ENCODE measurements at regions of chr9 and their contacts with region 1.

Region 1: DNA sequence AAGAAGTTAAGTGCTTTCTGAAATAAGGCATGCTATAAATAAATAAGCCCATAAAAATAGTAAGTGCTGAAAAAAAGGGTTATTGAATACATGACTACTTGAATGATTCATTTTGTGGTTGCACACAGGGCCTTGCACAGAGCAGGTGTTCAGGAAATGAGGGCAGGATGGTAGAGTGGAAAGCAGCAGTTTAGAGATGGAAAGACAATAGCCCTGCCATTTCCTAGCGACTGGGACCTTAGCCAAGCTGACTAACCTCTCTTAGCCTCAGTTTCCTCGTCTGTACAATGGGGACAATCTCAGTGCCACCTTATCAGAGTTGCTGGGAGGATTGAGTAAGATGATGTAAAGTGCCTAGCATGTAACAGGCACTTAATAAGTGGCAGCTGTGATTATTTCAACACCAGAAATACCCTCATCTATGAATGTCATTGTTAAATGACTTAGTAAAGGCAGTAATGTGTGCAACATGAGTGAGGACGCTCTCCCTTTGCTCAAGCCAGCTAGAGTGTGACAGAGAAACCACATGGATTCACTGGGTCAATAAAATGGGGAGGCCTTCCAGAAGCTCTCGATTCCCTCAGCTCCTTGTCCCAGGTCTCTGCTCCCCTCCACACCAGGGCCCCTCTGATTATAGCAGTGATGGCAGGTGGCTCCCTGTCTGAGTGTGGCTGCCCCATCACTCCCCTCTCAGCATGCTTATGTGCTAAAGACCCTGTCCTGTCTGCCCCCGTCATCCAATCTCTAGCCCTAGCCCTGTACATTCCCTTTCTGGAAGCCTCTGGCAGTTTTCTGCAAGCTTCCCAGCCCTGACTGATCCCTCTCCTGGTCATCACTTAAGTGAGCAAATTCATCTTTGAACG is 16.0 kb upstream of the PHF19 start:
- DNase-seq: no peak
- ATAC-seq: peak; percentile 82
- H3K4me3 Mint-ChIP-seq: peak overlapping the region; percentile 61
- H3K27ac Mint-ChIP-seq: peak overlapping the region; percentile 90
- H3K4me1 Mint-ChIP-seq: peaks cover 60% of the 10 kb centered on the region
- H3K27me3 Mint-ChIP-seq: no peaks in the 10 kb centered on the region
- CTCF ChIP-seq: no peak

Region 2: DNA sequence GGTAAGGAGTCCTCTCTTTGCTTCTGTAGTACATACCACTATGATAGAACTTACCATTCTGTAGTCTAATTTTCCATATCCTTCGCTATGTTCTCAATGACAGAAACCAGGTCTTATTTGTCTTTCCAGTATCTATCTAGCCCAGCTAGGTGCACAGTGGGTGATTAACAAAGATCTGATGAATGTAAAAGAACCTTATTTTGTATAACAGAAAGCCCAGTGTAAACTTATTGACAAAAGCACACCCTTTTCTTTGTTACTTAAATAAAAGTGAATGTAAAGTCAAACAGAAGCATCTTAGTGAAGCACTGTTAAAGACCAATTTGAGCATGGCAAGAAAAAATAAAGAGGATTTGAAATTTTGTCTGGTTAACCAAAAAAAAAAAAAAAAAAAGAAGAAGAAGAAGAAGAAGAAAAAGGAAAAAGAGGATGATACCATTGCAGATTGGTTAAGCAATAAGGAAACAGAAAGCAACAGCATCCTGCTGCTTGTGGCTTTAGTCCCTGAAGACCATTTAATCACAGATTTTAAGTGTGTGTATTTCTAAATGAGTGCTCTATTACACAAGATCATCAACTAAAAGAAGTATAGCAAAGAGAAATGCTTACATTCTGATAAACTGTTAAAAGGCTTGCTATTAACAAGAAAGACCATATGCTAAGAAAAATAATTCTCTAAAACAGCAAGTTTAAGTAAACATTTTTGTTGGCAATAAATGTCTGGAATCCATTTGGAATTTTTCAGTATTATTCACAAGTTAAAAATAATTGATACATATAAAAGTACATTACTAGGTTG is 199.9 kb before region 1 on chr9:
- CTCF ChIA-PET with region 1: no interaction called
- POLR2A ChIA-PET with region 1: interaction called, 10 read pairs
- intact Hi-C with region 1: no loop called
- DNase-seq: no peak
- ATAC-seq: peak; percentile 78
- H3K4me3 Mint-ChIP-seq: peak overlapping the region; percentile 44
- H3K27ac Mint-ChIP-seq: peak overlapping the region; percentile 78
- H3K4me1 Mint-ChIP-seq: peaks cover 32% of the 10 kb centered on the region
- H3K27me3 Mint-ChIP-seq: no peaks in the 10 kb centered on the region
- CTCF ChIP-seq: no peak

Region 3: GRCh38 chr9:120842690-120843499 is 50.1 kb before region 1 on chr9 and contains the start of gene PSMD5:
- CTCF ChIA-PET with region 1: no interaction called
- POLR2A ChIA-PET with region 1: no interaction called
- intact Hi-C with region 1: loop called (anchors 1 kb)
- DNase-seq: peak; percentile 75
- ATAC-seq: peak; percentile 99
- H3K4me3 Mint-ChIP-seq: peak within 1 kb of the TSS; percentile 90
- H3K27ac Mint-ChIP-seq: peak within 1 kb of the TSS; percentile 91
- H3K4me1 Mint-ChIP-seq: peaks cover 42% of the 10 kb centered on the region
- H3K27me3 Mint-ChIP-seq: no peaks in the 10 kb centered on the region
- CTCF ChIP-seq: no peak
- total RNA-seq, gene PSMD5: 34.8 and 38.9 TPM in 2 replicates

Region 4: DNA sequence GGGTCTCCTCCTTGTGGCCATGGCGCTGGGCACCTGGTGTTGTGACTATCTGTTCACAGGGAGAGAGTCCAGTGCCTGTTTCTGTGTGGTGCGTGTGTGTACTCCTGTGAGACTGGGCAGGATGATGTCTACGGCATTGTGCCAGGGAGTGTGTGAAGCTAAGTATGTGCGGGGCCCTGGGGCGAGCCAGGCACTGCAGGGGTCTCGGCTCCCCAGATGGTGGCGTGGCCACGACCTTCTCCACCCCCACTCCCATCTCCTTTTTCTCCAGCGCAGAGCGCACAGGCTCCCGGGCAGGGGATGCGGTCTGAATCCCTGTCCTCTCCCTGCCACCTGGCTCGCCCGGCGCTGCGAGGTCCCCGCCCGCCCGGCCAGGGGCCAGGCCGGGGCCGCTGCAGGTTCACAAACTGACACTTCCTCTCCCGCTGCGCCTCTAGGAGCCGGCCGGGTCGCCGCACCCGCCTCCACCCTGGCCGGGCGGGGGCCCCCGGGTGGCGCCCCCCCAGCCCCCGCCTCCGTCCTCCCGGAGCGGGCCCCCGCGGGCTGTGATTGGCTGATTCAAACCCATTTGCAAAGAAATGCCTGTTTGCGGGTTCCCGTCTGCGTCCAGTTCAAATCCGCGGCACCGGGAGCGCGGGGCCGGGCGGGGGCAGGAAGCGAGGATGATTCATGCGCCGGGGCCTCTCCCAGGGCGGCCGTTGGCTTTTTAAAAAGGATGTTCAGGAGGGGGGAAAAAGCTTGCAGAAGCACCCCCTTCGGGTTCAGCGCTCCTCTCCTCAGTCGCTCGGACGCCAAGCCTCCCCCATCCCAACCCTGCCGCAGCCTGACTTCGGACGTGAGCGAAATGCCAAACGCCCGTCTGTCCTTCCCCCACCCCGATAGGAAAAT is 16.8 kb before region 1 on chr9:
- CTCF ChIA-PET with region 1: interaction called, 4 read pairs
- POLR2A ChIA-PET with region 1: interaction called, 33 read pairs
- intact Hi-C with region 1: loop called (anchors 1 kb)
- DNase-seq: peak; percentile 66
- ATAC-seq: peak; percentile 74
- H3K4me3 Mint-ChIP-seq: peak overlapping the region; percentile 83
- H3K27ac Mint-ChIP-seq: peak overlapping the region; percentile 80
- H3K4me1 Mint-ChIP-seq: peaks cover 54% of the 10 kb centered on the region
- H3K27me3 Mint-ChIP-seq: peaks cover 2% of the 10 kb centered on the region
- CTCF ChIP-seq: no peak

Region 5: GRCh38 chr9:120904061-120904977 is 11.3 kb after region 1 on chr9:
- CTCF ChIA-PET with region 1: interaction called, 3 read pairs
- POLR2A ChIA-PET with region 1: interaction called, 61 read pairs
- intact Hi-C with region 1: no loop called
- DNase-seq: no peak
- ATAC-seq: peak; percentile 53
- H3K4me3 Mint-ChIP-seq: peak overlapping the region; percentile 24
- H3K27ac Mint-ChIP-seq: peak overlapping the region; percentile 74
- H3K4me1 Mint-ChIP-seq: peaks cover 68% of the 10 kb centered on the region
- H3K27me3 Mint-ChIP-seq: no peaks in the 10 kb centered on the region
- CTCF ChIP-seq: no peak

Region 6: GRCh38 chr9:120936011-120936763 is 43.2 kb after region 1 on chr9:
- CTCF ChIA-PET with region 1: interaction called, 5 read pairs
- POLR2A ChIA-PET with region 1: interaction called, 114 read pairs
- intact Hi-C with region 1: loop called (anchors 1 kb)
- DNase-seq: peak; percentile 72
- ATAC-seq: peak; percentile 37
- H3K4me3 Mint-ChIP-seq: peak overlapping the region; percentile 71
- H3K27ac Mint-ChIP-seq: peak overlapping the region; percentile 82
- H3K4me1 Mint-ChIP-seq: peaks cover 63% of the 10 kb centered on the region
- H3K27me3 Mint-ChIP-seq: no peaks in the 10 kb centered on the region
- CTCF ChIP-seq: peak; percentile 52

Region 7: GRCh38 chr9:120944434-120944843 is 51.5 kb after region 1 on chr9:
- CTCF ChIA-PET with region 1: interaction called, 3 read pairs
- POLR2A ChIA-PET with region 1: interaction called, 7 read pairs
- intact Hi-C with region 1: loop called (anchors 1 kb)
- DNase-seq: no peak
- ATAC-seq: peak; percentile 100
- H3K4me3 Mint-ChIP-seq: peak overlapping the region; percentile 7
- H3K27ac Mint-ChIP-seq: peak overlapping the region; percentile 64
- H3K4me1 Mint-ChIP-seq: peaks cover 23% of the 10 kb centered on the region
- H3K27me3 Mint-ChIP-seq: no peaks in the 10 kb centered on the region
- CTCF ChIP-seq: no peak

Region 8: DNA sequence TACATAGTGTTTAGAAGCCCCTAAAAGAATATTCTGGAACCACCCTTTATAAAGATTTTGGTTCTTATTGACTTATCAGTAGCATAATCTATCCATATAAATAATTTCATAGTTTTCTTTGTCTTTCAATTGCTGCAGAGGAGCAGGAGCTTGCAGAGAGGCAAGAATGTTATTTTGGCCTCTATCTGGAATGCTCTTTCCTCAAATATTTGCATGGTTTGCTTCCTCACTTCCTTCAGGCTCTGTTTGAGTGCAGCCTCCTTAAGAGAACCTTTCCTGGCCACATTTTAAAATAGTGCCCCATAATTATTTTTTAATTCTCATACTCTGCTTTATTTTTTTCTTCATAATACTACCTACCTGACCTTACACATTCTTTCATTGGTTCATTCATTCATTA is 155.6 kb after region 1 on chr9:
- CTCF ChIA-PET with region 1: no interaction called
- POLR2A ChIA-PET with region 1: no interaction called
- intact Hi-C with region 1: no loop called
- DNase-seq: no peak
- ATAC-seq: no peak
- H3K4me3 Mint-ChIP-seq: no peak overlapping the region
- H3K27ac Mint-ChIP-seq: no peak overlapping the region
- H3K4me1 Mint-ChIP-seq: no peaks in the 10 kb centered on the region
- H3K27me3 Mint-ChIP-seq: no peaks in the 10 kb centered on the region
- CTCF ChIP-seq: no peak

Measured in activated B cell treated with CpG ODN at 0.5 μM for 24 hours (primary cell).